Activated CD4-positive, alpha-beta T cell treated with anti-CD3 and anti-CD28 coated beads, Interleukin-2, amount 10 ng/mL, durations not matched to agents 7 days and 5 days (primary cell): ENCODE measurements at regions of chr7 and their contacts with region 1.

Region 1: GRCh38 chr7:91311844-91312243 is 47.6 kb downstream of the FZD1 start:
- DNase-seq: no peak
- H3K4me3 Mint-ChIP-seq: no peak overlapping the region
- H3K27ac Mint-ChIP-seq: no peak overlapping the region
- H3K4me1 Mint-ChIP-seq: no peaks in the 10 kb centered on the region
- H3K27me3 Mint-ChIP-seq: peaks cover 1% of the 10 kb centered on the region

Region 2: GRCh38 chr7:91330866-91331265 is 19.0 kb after region 1 on chr7:
- CTCF ChIA-PET with region 1: no interaction called
- POLR2A ChIA-PET with region 1: no interaction called
- DNase-seq: no peak
- H3K4me3 Mint-ChIP-seq: no peak overlapping the region
- H3K27ac Mint-ChIP-seq: no peak overlapping the region
- H3K4me1 Mint-ChIP-seq: no peaks in the 10 kb centered on the region
- H3K27me3 Mint-ChIP-seq: no peaks in the 10 kb centered on the region

Region 3: GRCh38 chr7:91373111-91373800 is 61.4 kb after region 1 on chr7:
- CTCF ChIA-PET with region 1: no interaction called
- POLR2A ChIA-PET with region 1: interaction called, 11 read pairs
- DNase-seq: no peak
- H3K4me3 Mint-ChIP-seq: no peak overlapping the region
- H3K27ac Mint-ChIP-seq: no peak overlapping the region
- H3K4me1 Mint-ChIP-seq: no peaks in the 10 kb centered on the region
- H3K27me3 Mint-ChIP-seq: no peaks in the 10 kb centered on the region